ENCODE measurements at regions of chr3 and their contacts with region 1.

Region 1: GRCh38 chr3:150248116-150248887 is 159.8 kb upstream of the TSC22D2 start:
- DNase-seq: no peak
- ATAC-seq: no peak
- H3K4me3 ChIP-seq: no peak overlapping the region
- H3K4me3 Mint-ChIP-seq: no peak overlapping the region
- H3K27ac ChIP-seq: no peak overlapping the region
- H3K27ac Mint-ChIP-seq: no peak overlapping the region
- H3K4me1 ChIP-seq: no peaks in the 10 kb centered on the region
- H3K4me1 Mint-ChIP-seq: no peaks in the 10 kb centered on the region
- H3K27me3 ChIP-seq: peaks cover 0 to 10% of the 10 kb centered on the region in 2 experiments
- H3K27me3 Mint-ChIP-seq: peaks cover 23 to 44% of the 10 kb centered on the region in 2 donors

Region 2: DNA sequence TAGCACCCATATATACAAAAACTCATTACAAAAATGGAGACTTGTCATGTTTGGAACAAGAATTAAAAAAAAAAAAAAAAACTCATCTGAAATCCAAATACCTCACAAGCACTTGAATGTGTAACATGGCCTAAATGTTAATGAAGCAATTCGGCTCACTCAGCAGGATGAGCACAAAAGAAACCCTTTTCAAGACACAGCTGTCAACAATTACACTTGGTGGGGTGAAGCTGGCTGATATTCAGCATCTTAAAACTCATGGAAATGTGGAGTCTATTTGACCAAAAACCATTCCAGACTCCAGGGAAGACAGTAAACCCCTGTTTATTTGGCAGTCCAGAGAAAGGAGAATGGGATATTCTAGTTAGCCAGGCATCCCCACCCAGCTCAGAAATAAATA is 45.6 kb before region 1 on chr3:
- CTCF ChIA-PET with region 1: no interaction called
- POLR2A ChIA-PET with region 1: no interaction called
- DNase-seq: no peak
- ATAC-seq: no peak
- H3K4me3 ChIP-seq: no peak overlapping the region
- H3K4me3 Mint-ChIP-seq: no peak overlapping the region
- H3K27ac ChIP-seq: no peak overlapping the region
- H3K27ac Mint-ChIP-seq: no peak overlapping the region
- H3K4me1 ChIP-seq: no peaks in the 10 kb centered on the region
- H3K4me1 Mint-ChIP-seq: no peaks in the 10 kb centered on the region
- H3K27me3 ChIP-seq: peaks cover 0 to 2% of the 10 kb centered on the region in 2 experiments
- H3K27me3 Mint-ChIP-seq: peaks cover 20 to 30% of the 10 kb centered on the region in 2 donors

Region 3: GRCh38 chr3:150319904-150320303 is 71.6 kb after region 1 on chr3:
- CTCF ChIA-PET with region 1: no interaction called
- POLR2A ChIA-PET with region 1: no interaction called
- DNase-seq: no peak
- ATAC-seq: no peak
- H3K4me3 ChIP-seq: no peak overlapping the region
- H3K4me3 Mint-ChIP-seq: no peak overlapping the region
- H3K27ac ChIP-seq: no peak overlapping the region
- H3K27ac Mint-ChIP-seq: no peak overlapping the region
- H3K4me1 ChIP-seq: no peaks in the 10 kb centered on the region
- H3K4me1 Mint-ChIP-seq: no peaks in the 10 kb centered on the region
- H3K27me3 ChIP-seq: peaks cover 0 to 2% of the 10 kb centered on the region in 2 experiments
- H3K27me3 Mint-ChIP-seq: peaks cover 19 to 23% of the 10 kb centered on the region in 2 donors

Region 4: DNA sequence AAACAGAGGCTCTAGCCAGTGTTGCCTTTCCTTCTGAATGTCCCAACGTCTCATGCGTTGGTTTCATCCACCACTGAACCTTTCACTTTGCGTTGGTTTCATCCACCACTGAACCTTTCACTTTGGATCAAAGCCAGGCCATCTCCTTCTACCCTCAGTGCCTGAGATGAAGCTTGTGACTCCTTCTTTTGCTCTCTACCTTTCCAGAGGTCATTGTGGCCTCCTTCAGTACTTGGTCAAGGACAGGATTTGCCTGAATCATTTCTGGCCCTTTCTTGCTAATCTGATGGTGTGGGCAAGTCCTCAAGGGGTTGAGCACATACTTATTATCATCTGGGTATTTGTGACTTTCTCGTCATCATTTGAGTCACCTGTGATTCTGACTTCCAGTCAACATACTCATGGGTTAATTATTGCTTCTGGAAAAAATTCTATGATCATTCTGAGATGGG is 404.8 kb after region 1 on chr3:
- CTCF ChIA-PET with region 1: no interaction called
- POLR2A ChIA-PET with region 1: interaction called in 1 of 2 experiments, 16 read pairs
- DNase-seq: no peak
- ATAC-seq: no peak
- H3K4me3 ChIP-seq: no peak overlapping the region
- H3K4me3 Mint-ChIP-seq: no peak overlapping the region
- H3K27ac ChIP-seq: no peak overlapping the region
- H3K27ac Mint-ChIP-seq: no peak overlapping the region
- H3K4me1 ChIP-seq: no peaks in the 10 kb centered on the region
- H3K4me1 Mint-ChIP-seq: no peaks in the 10 kb centered on the region
- H3K27me3 ChIP-seq: no peaks in the 10 kb centered on the region
- H3K27me3 Mint-ChIP-seq: no peaks in the 10 kb centered on the region

Measured in T-cell (primary cell).